CD4-positive, alpha-beta T cell (primary cell): ENCODE measurements at regions of chr9 and their contacts with region 1.

Region 1: DNA sequence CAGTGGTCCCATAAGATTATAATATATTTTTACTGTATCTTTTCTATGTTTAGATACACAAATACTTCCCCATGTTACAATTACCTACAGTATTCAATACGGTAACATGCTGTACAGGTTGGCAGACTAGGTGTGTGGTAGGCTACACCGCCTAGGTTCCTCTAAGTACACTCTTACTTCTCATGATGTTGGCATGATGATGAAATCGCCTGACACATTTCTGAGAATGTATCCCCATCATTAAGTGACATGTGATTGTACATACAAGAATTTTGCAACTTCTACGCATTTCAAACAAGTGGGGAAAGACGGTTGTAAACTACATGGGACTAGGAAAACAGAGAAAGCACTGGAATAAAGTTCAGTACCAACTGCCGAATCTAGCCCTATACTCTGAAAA is 53.3 kb downstream of the SETX start:
- DNase-seq: no peak
- ATAC-seq: no peak
- H3K4me3 ChIP-seq: no peak overlapping the region
- H3K4me3 Mint-ChIP-seq: no peak overlapping the region
- H3K27ac ChIP-seq: no peak overlapping the region
- H3K27ac Mint-ChIP-seq: no peak overlapping the region
- H3K4me1 ChIP-seq: no peaks in the 10 kb centered on the region
- H3K4me1 Mint-ChIP-seq: peaks cover 25% of the 10 kb centered on the region
- H3K27me3 ChIP-seq: no peaks in the 10 kb centered on the region
- H3K27me3 Mint-ChIP-seq: no peaks in the 10 kb centered on the region
- CTCF ChIP-seq: no peak

Region 2: DNA sequence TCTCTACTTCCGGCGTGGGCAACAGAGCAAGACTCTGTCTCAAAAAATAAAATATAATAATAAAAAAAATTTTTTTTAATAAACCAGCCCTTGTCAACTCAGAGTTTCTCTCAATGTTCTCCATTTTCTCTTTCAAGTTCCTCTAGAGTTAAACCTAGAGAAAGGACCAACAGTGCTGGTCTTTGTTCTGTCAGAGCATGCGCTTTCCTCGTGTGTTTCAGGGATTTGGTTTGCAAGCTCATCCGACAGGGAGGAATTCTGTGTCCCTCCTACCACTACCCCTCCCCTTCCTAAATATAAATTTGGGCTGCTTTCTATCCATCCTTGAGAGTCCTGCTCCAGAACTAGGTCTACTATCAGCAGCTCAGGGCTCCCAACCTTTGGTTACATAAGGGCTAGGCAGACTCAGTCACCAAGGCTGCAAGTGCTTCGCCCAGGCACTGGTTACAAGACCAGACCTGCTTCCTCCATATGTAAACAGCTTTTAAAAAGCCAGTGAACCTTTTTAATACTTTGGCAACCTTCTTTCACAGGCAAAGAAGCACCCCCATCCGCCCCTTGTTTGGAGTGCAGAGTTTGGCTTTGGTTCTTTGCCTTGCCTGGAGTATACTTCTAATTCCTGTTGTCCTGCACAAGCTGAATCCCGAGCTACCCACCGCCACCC is 39.8 kb after region 1 on chr9:
- CTCF ChIA-PET with region 1: no interaction called
- POLR2A ChIA-PET with region 1: no interaction called
- intact Hi-C with region 1: loop called in 1 of 2 experiments (anchors 5 kb)
- DNase-seq: no peak
- ATAC-seq: no peak
- H3K4me3 ChIP-seq: no peak overlapping the region
- H3K4me3 Mint-ChIP-seq: no peak overlapping the region
- H3K27ac ChIP-seq: no peak overlapping the region
- H3K27ac Mint-ChIP-seq: no peak overlapping the region
- H3K4me1 ChIP-seq: no peaks in the 10 kb centered on the region
- H3K4me1 Mint-ChIP-seq: peaks cover 22% of the 10 kb centered on the region
- H3K27me3 ChIP-seq: no peaks in the 10 kb centered on the region
- H3K27me3 Mint-ChIP-seq: no peaks in the 10 kb centered on the region
- CTCF ChIP-seq: no peak